ENCODE measurements at regions of chr1 and their contacts with region 1.

Region 1: GRCh38 chr1:154479764-154480421 is 22.1 kb upstream of the TDRD10 start:
- DNase-seq: peak; percentile 45
- ATAC-seq: peak; percentile 97
- H3K4me3 ChIP-seq: no peak overlapping the region
- H3K27ac ChIP-seq: no peak overlapping the region
- H3K4me1 ChIP-seq: peaks cover 3% of the 10 kb centered on the region; the same call in 1 of the 2 replicates
- H3K27me3 ChIP-seq: peaks cover 0 to 3% of the 10 kb centered on the region in 2 experiments; a peak in 1 of 4 replicates
- CTCF ChIP-seq: peak; percentile 92 to 95 (median 92); a peak in 5 of 6 replicates
- EP300 ChIP-seq: no peak
- POLR2A ChIP-seq: no peak
- RAD21 ChIP-seq: peak; percentile 100

Region 2: GRCh38 chr1:154263465-154264332 is 216.2 kb before region 1 on chr1:
- CTCF ChIA-PET with region 1: no interaction called
- POLR2A ChIA-PET with region 1: no interaction called
- RAD21 ChIA-PET with region 1: no interaction called
- SMC1A ChIA-PET with region 1: no interaction called
- in situ Hi-C with region 1: no loop called
- intact Hi-C with region 1: no loop called
- DNase-seq: no peak
- ATAC-seq: no peak
- H3K4me3 ChIP-seq: no peak overlapping the region
- H3K27ac ChIP-seq: no peak overlapping the region
- H3K4me1 ChIP-seq: no peaks in the 10 kb centered on the region
- H3K27me3 ChIP-seq: no peaks in the 10 kb centered on the region
- CTCF ChIP-seq: no peak
- EP300 ChIP-seq: no peak
- POLR2A ChIP-seq: no peak; the same call in 1 of the 2 replicates
- RAD21 ChIP-seq: no peak

Region 3: DNA sequence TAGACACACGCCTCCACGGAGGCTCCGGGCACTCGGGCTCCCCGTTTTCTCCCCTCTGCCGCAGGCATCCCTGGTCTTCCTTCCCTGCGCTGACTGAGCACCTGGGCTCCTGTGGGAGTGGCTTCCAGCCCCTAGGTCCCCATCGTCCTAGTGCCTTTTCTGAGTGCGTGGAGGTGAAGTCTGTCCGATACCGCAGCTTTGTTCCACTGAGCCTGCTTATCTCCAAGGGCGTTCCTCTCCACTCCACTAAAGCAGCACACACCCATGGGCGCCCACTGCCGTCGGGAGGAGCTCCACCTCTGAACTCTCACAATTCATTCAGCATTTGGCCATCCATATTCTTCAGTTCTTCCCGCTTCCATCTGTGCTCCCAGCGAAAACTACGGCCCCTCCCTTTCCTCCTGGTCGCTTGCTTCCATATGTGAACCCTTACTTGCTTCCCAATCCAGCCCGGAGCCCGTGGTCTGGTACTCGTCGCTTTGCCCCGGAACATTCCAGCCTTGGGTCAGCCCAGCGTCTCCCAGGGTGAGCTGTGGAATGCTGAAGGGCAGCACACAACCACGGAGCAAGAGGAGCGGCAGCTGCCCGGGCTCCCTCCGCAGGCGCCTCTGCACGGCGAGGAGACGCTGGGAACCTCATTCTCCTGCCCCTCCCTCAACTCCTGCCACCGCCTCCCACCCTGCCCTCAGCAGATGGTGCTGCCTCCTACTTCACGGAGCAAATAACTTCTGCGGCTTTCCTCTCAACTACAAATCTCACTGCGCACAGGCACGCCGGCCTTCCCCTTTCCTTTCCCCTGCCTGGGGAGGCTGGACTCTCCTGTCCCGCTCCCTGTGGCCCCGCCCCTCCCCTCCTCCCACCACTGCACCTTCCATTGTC is 127.1 kb before region 1 on chr1:
- CTCF ChIA-PET with region 1: interaction called, 94 read pairs
- POLR2A ChIA-PET with region 1: no interaction called
- RAD21 ChIA-PET with region 1: interaction called, 12 read pairs
- SMC1A ChIA-PET with region 1: interaction called, 33 read pairs
- in situ Hi-C with region 1: no loop called
- intact Hi-C with region 1: loop called (anchors 1 kb)
- DNase-seq: no peak
- ATAC-seq: peak; percentile 77
- H3K4me3 ChIP-seq: peak overlapping the region; percentile 18; the same call in 1 of the 2 replicates
- H3K27ac ChIP-seq: no peak overlapping the region
- H3K4me1 ChIP-seq: peaks cover 10% of the 10 kb centered on the region
- H3K27me3 ChIP-seq: peaks cover 0 to 5% of the 10 kb centered on the region in 2 experiments; a peak in 2 of 4 replicates
- CTCF ChIP-seq: peak in 1 of 3 experiments; percentile 48; a peak in 2 of 6 replicates
- EP300 ChIP-seq: no peak
- POLR2A ChIP-seq: no peak
- RAD21 ChIP-seq: peak; percentile 22; the same call in 1 of the 2 replicates

Region 4: DNA sequence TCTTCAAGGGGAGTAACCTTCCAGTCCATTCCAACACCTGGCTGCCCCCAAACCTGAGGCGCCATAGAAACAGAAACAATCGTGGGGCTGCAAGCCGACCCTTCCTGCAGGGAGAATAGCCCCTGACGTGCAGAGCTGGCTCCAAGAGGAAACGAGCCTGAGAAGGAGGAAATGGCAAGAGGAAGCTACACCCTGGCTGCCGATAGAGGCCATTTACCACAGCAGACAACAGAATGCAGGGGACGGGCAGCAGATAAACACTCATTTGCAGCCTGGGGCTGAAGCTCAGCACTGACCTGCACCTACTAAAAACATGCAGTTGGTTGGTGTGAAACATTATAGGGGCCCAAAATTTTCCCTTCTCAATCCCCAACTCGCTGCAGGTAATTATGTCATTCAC is 13.4 kb after region 1 on chr1:
- CTCF ChIA-PET with region 1: interaction called, 80 read pairs
- POLR2A ChIA-PET with region 1: interaction called, 3 read pairs
- RAD21 ChIA-PET with region 1: interaction called, 19 read pairs
- SMC1A ChIA-PET with region 1: interaction called, 97 read pairs
- in situ Hi-C with region 1: no loop called
- intact Hi-C with region 1: no loop called
- DNase-seq: no peak
- ATAC-seq: peak; percentile 47
- H3K4me3 ChIP-seq: no peak overlapping the region
- H3K27ac ChIP-seq: no peak overlapping the region; the same call in 1 of the 2 replicates
- H3K4me1 ChIP-seq: peaks cover 45% of the 10 kb centered on the region
- H3K27me3 ChIP-seq: no peaks in the 10 kb centered on the region
- CTCF ChIP-seq: no peak
- EP300 ChIP-seq: no peak
- POLR2A ChIP-seq: no peak
- RAD21 ChIP-seq: no peak

Region 5: DNA sequence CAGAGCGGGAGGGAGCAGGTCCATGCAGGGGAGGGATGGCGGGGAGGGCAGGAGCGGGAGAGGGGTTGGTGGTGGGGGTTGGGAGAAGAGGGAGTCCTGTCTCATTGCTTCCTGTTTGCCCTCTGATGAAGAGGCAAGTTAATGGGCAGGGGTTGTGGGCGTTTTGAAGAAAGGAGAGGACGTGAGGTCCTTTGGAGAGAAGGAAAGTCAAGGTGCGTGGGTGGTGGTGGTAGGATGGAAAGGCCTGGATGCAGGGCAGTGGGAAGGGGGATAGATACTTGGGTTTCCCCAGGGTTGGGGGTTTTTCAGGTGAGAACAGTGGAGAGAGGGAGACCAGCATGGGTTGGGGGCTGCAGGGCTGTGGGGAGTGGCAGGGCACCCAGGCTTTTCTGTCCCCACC is 61.3 kb after region 1 on chr1:
- CTCF ChIA-PET with region 1: interaction called, 302 read pairs
- POLR2A ChIA-PET with region 1: interaction called, 11 read pairs
- RAD21 ChIA-PET with region 1: interaction called, 189 read pairs
- SMC1A ChIA-PET with region 1: interaction called, 151 read pairs
- in situ Hi-C with region 1: no loop called
- intact Hi-C with region 1: loop called (anchors 1 kb)
- DNase-seq: no peak
- ATAC-seq: no peak
- H3K4me3 ChIP-seq: no peak overlapping the region
- H3K27ac ChIP-seq: no peak overlapping the region
- H3K4me1 ChIP-seq: no peaks in the 10 kb centered on the region
- H3K27me3 ChIP-seq: peaks cover 3% of the 10 kb centered on the region in 2 experiments; a peak in 2 of 4 replicates
- CTCF ChIP-seq: no peak
- EP300 ChIP-seq: no peak
- POLR2A ChIP-seq: no peak
- RAD21 ChIP-seq: no peak

Region 6: GRCh38 chr1:154586231-154587020 is 106.5 kb after region 1 on chr1:
- CTCF ChIA-PET with region 1: no interaction called
- POLR2A ChIA-PET with region 1: no interaction called
- RAD21 ChIA-PET with region 1: no interaction called
- SMC1A ChIA-PET with region 1: no interaction called
- in situ Hi-C with region 1: no loop called
- intact Hi-C with region 1: no loop called
- DNase-seq: no peak
- ATAC-seq: no peak
- H3K4me3 ChIP-seq: no peak overlapping the region
- H3K27ac ChIP-seq: no peak overlapping the region
- H3K4me1 ChIP-seq: peaks cover 12% of the 10 kb centered on the region
- H3K27me3 ChIP-seq: no peaks in the 10 kb centered on the region
- CTCF ChIP-seq: no peak
- EP300 ChIP-seq: no peak
- POLR2A ChIP-seq: peak; percentile 30; the same call in 1 of the 2 replicates
- RAD21 ChIP-seq: no peak

Region 7: DNA sequence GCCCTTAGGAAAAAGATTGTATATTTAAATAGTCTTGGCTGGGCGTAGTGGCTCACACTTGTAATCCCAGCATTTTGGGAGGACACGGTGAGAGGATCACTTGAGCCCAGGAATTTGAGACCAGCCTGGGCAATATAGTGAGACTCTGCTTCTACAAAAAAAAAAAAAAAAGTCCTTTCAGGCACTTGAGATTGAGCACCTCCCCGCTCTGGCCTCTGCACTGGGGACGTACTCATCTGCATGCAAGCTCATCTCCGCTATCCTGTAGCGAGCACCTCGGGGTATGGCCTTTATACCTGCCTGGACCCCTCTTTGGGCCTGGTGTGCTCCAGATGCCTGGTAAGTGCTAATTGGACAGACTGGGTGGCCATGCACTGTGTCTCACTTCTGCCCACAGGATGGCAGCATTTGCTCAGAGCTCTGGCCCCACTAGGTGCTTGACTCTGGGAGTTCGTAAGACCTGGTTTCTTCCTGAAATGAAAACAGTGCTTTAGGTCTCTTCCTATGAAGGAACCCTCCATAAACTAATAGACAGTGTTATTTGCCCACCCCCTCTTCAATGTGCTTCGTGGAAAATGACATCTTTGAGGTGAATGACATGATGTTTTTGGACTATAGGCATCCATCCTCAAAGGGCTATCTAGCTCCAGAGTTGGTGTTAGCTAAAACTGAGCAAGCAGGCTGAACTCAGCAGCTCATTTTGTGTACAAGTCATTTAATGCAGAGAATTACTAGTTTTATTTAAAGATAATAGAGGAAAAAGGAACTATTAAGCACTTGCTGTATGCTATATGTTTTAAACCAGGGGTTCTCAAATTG is 189.8 kb after region 1 on chr1:
- CTCF ChIA-PET with region 1: interaction called, 18 read pairs
- POLR2A ChIA-PET with region 1: no interaction called
- RAD21 ChIA-PET with region 1: interaction called, 4 read pairs
- SMC1A ChIA-PET with region 1: interaction called, 5 read pairs
- in situ Hi-C with region 1: no loop called
- intact Hi-C with region 1: loop called (anchors 5 kb)
- DNase-seq: peak; percentile 67
- ATAC-seq: peak; percentile 100
- H3K4me3 ChIP-seq: no peak overlapping the region
- H3K27ac ChIP-seq: no peak overlapping the region
- H3K4me1 ChIP-seq: no peaks in the 10 kb centered on the region
- H3K27me3 ChIP-seq: no peaks in the 10 kb centered on the region
- CTCF ChIP-seq: peak; percentile 90 to 96 (median 93); a peak in 5 of 6 replicates
- EP300 ChIP-seq: no peak
- POLR2A ChIP-seq: no peak
- RAD21 ChIP-seq: peak; percentile 98

Region 8: DNA sequence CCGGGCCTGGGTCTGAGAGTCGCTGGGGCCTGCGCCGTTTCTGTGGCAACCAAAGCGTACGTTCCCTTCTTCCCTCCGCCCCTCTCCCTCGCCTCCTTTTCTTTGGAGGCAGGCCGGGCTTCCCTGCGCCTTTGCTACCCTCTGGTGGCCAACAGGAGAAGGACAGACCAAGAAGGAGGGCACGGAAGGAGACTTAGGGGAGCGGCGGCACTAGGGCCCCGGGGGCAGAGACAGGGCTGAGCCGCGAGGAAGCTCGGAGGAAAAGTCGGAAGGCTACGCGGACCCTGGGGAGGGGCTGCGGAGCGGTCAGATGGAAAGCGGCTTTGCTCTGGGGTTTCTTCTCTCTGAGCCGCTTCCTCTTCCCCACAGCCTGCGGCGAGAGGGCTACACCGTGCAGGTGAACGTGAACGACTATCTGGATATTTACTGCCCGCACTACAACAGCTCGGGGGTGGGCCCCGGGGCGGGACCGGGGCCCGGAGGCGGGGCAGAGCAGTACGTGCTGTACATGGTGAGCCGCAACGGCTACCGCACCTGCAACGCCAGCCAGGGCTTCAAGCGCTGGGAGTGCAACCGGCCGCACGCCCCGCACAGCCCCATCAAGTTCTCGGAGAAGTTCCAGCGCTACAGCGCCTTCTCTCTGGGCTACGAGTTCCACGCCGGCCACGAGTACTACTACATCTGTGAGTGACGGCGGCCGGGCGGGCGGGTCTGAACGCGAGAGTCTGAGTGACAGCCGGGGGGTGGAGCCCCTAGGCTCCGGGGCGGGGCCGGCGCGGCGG is 605.0 kb after region 1 on chr1:
- CTCF ChIA-PET with region 1: interaction called, 5 read pairs
- POLR2A ChIA-PET with region 1: no interaction called
- RAD21 ChIA-PET with region 1: interaction called, 3 read pairs
- SMC1A ChIA-PET with region 1: no interaction called
- in situ Hi-C with region 1: no loop called
- intact Hi-C with region 1: loop called (anchors 10 kb)
- DNase-seq: peak; percentile 72
- ATAC-seq: peak; percentile 90
- H3K4me3 ChIP-seq: peak overlapping the region; percentile 72
- H3K27ac ChIP-seq: peak overlapping the region; percentile 72
- H3K4me1 ChIP-seq: peaks cover 33% of the 10 kb centered on the region
- H3K27me3 ChIP-seq: peaks cover 17 to 23% of the 10 kb centered on the region in 2 experiments
- CTCF ChIP-seq: peak; percentile 90 to 99 (median 95)
- EP300 ChIP-seq: 0 out of 4 replicates have a peak, but pooled peaks of 1 of the 2 experiments have one; percentile 48
- POLR2A ChIP-seq: no peak; the same call in 1 of the 2 replicates
- RAD21 ChIP-seq: peak; percentile 99